OCI-LY7 (cell line): ENCODE measurements at regions of chr2 and their contacts with region 1.

Region 1: GRCh38 chr2:219459460-219460311 is 25.0 kb downstream of the SPEG start:
- DNase-seq: peak; percentile 55
- H3K4me3 ChIP-seq: no peak overlapping the region
- H3K27ac ChIP-seq: no peak overlapping the region
- H3K4me1 ChIP-seq: peaks cover 9% of the 10 kb centered on the region
- CTCF ChIP-seq: peak; percentile 84

Region 2: DNA sequence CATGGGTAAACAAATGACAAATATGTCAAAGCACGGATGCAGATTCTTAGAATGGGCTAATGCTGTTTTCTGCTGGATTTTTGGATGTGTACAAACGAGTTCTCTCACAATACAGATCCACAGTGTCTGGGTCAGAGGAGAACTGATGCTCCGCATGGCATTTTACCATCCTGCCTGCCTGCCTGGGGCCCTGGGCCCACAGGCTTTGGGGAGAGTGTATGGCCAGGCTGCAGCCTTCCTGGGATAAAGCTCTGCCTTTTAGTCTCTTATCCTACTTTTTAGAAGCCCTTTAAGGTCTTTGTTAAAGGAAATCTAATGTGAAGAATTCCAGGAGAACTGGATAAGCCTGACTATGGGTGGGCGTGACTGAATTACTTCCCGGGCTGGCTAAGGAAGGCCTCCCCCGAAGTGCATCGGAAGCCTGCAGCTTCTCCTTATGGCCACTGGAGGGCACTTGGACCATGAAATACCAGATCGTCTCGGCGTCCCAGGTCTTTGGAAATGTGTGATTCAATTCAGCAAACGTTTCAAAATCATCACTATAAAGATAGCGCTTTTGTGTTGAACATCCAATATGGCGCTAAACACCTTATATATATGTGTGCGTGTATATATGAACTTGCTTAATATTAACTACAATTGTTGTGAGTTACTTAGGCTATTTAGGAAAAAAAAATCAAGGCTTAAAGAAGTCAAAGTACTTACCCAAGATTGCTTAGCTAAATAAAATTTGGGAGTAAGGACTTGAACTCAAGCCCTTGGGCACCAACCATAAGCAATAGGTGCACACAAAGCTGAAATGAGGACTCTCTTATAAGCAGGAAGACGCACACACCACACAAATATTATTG is 56.8 kb before region 1 on chr2:
- CTCF ChIA-PET with region 1: interaction called, 4 read pairs
- POLR2A ChIA-PET with region 1: no interaction called
- intact Hi-C with region 1: loop called (anchors 1 kb)
- DNase-seq: peak; percentile 79
- H3K4me3 ChIP-seq: no peak overlapping the region
- H3K27ac ChIP-seq: no peak overlapping the region
- H3K4me1 ChIP-seq: no peaks in the 10 kb centered on the region
- CTCF ChIP-seq: peak; percentile 98

Region 3: DNA sequence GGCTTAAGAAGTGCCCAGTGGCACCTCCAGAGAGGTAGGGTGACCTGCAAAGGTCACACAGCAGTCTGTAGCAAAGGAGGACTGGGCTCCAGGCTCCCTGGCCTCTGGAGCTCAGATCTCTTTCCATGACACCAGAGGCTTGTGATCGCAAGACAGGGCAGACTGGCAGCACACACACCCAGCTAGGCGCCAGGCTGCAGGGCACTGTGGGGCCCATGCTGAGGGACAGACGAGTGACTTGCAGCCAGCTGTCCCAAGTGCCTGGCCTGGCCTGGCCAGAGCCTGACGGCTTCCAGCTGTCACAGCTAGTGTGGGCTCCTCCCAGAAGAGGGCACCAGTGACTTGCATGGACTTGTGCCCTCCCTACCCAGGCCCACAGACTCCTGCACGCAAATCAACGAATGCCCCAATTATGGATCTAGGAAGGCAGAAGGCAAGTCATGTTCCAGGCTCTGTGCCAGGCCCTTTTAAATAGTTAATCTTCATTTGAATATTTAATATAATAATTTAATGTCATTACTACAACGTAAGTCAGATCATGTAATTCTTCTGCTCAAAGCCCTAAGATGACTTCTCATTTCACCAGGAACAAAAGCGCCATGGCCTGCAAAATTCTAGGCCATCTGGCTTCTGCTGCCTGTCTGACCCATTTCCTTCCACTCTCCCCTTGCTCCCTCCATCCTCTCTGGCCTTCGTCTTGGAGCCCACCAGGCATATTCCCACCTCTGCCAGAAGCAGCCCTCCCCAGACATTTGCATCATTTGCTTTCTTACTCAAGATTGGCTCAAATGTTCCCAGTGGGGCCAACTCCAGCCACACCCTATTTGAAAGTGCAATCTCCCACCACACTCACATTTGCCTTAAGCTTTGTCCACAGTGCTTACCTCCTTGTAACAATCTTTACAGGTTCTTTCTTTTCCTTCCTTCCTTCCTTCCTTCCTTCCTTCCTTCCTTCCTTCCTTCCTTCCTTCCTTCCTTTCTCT is 28.8 kb before region 1 on chr2:
- CTCF ChIA-PET with region 1: interaction called, 4 read pairs
- POLR2A ChIA-PET with region 1: no interaction called
- intact Hi-C with region 1: loop called (anchors 2 kb)
- DNase-seq: peak; percentile 27
- H3K4me3 ChIP-seq: no peak overlapping the region
- H3K27ac ChIP-seq: no peak overlapping the region
- H3K4me1 ChIP-seq: no peaks in the 10 kb centered on the region
- CTCF ChIP-seq: peak; percentile 48